ENCODE measurements at regions of chr20 and their contacts with region 1.

Region 1: GRCh38 chr20:19661717-19662636 is 96.1 kb upstream of the RIN2 start:
- DNase-seq: peak; percentile 42
- H3K4me3 ChIP-seq: no peak overlapping the region
- H3K27ac ChIP-seq: no peak overlapping the region
- H3K27me3 ChIP-seq: peaks cover 31% of the 10 kb centered on the region
- CTCF ChIP-seq: peak; percentile 98

Region 2: DNA sequence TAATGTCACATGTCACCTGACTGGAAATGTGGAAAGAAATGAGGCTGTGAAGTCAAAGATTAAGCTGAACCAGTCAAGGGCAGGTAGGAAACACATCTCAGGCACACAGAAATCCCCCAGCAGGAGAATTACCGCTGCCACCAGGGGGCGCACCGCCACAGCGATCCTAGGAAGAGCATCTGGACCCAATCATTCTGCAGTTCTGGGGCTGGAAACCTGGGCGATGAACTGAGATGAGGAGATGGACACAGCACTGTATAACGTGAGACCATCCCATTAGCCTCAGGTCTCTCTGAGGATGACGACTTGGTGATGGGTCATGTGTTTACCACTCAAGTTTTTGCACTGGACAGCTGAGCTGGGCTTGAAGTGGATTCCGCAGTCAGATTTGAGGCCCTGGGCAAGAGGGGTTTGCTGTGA is 456.0 kb before region 1 on chr20:
- CTCF ChIA-PET with region 1: interaction called, 37 read pairs
- POLR2A ChIA-PET with region 1: no interaction called
- DNase-seq: no peak
- H3K4me3 ChIP-seq: no peak overlapping the region
- H3K27ac ChIP-seq: no peak overlapping the region
- H3K27me3 ChIP-seq: peaks cover 2% of the 10 kb centered on the region
- CTCF ChIP-seq: peak; percentile 74

Region 3: GRCh38 chr20:19540392-19540791 is 121.6 kb before region 1 on chr20:
- CTCF ChIA-PET with region 1: no interaction called
- POLR2A ChIA-PET with region 1: no interaction called
- DNase-seq: no peak
- H3K4me3 ChIP-seq: no peak overlapping the region
- H3K27ac ChIP-seq: no peak overlapping the region
- H3K27me3 ChIP-seq: no peaks in the 10 kb centered on the region
- CTCF ChIP-seq: no peak

Region 4: GRCh38 chr20:19571996-19572395 is 90.0 kb before region 1 on chr20:
- CTCF ChIA-PET with region 1: no interaction called
- POLR2A ChIA-PET with region 1: no interaction called
- DNase-seq: no peak
- H3K4me3 ChIP-seq: no peak overlapping the region
- H3K27ac ChIP-seq: no peak overlapping the region
- H3K27me3 ChIP-seq: no peaks in the 10 kb centered on the region
- CTCF ChIP-seq: no peak

Region 5: GRCh38 chr20:19628570-19629169 is 33.3 kb before region 1 on chr20:
- CTCF ChIA-PET with region 1: interaction called, 46 read pairs
- POLR2A ChIA-PET with region 1: no interaction called
- DNase-seq: peak; percentile 24
- H3K4me3 ChIP-seq: no peak overlapping the region
- H3K27ac ChIP-seq: no peak overlapping the region
- H3K27me3 ChIP-seq: no peaks in the 10 kb centered on the region
- CTCF ChIP-seq: peak; percentile 71

Region 6: GRCh38 chr20:19673575-19673974 is 11.6 kb after region 1 on chr20:
- CTCF ChIA-PET with region 1: interaction called, 14 read pairs
- POLR2A ChIA-PET with region 1: no interaction called
- DNase-seq: no peak
- H3K4me3 ChIP-seq: no peak overlapping the region
- H3K27ac ChIP-seq: no peak overlapping the region
- H3K27me3 ChIP-seq: peaks cover 28% of the 10 kb centered on the region
- CTCF ChIP-seq: no peak